Left cardiac atrium (tissue), 4 donors: ENCODE measurements at regions of chr20 and their contacts with region 1.

Region 1: GRCh38 chr20:15913391-15914025 is 659.7 kb downstream of the KIF16B start:
- DNase-seq: no peak
- ATAC-seq: no peak

Region 2: GRCh38 chr20:15091421-15092037 is 822.0 kb before region 1 on chr20:
- intact Hi-C with region 1: loop called in 1 of 2 experiments (anchors 10 kb)
- DNase-seq: no peak
- ATAC-seq: no peak